ENCODE measurements at regions of chr3 and their contacts with region 1.

Region 1: GRCh38 chr3:195259475-195260279 is 11.3 kb downstream of the XXYLT1 start:
- DNase-seq: peak; percentile 94
- H3K4me3 ChIP-seq: peak overlapping the region; percentile 68
- H3K27ac ChIP-seq: peak overlapping the region; percentile 84
- H3K4me1 ChIP-seq: peaks cover 39% of the 10 kb centered on the region
- CTCF ChIP-seq: peak; percentile 64

Region 2: DNA sequence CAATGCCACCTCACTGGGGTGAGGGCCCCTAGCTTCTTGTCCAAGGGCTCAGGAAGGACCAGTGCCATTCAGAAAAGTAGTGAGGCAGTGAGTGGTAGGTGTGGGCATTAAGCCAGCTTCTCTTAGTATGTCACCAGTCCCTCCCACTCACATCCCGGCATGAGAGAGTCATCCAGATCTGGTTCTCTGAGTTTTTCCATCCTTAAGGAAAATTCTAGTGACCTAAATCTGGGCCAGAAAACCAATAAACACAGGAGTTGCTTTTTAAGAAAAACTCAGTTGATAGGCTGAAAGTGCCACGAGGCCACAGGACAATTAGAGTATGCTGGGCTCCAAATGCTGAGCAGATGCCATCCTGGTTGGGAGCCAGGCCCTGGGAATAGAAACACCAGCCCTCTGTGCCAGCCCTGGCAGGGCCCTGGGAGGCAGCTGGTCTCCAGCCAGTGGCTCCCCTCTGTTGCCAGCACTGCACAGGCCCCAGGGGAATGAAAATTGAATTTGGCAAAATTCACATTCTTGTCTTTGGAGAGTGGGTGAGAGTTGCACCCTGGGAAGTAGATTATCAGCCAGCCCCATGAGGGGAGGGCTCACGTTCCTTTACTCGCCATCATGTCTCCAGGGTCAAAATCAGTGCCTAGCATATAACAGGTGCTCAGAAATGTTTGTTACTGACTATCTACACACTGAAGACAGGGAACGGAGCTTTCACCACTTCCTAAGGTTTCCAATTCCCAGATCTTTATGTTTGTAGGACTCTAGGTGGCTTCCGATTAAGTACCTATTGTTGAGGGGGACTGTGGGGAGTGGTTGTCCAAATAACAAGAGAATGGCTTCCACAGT is 521.2 kb before region 1 on chr3:
- CTCF ChIA-PET with region 1: no interaction called
- POLR2A ChIA-PET with region 1: no interaction called
- intact Hi-C with region 1: loop called (anchors 1 kb)
- DNase-seq: no peak
- H3K4me3 ChIP-seq: no peak overlapping the region
- H3K27ac ChIP-seq: no peak overlapping the region
- H3K4me1 ChIP-seq: peaks cover 30% of the 10 kb centered on the region
- CTCF ChIP-seq: no peak

Region 3: GRCh38 chr3:195001961-195002861 is 257.5 kb before region 1 on chr3:
- CTCF ChIA-PET with region 1: interaction called, 3 read pairs
- POLR2A ChIA-PET with region 1: no interaction called
- intact Hi-C with region 1: loop called (anchors 1 kb)
- DNase-seq: peak; percentile 58
- H3K4me3 ChIP-seq: no peak overlapping the region
- H3K27ac ChIP-seq: no peak overlapping the region
- H3K4me1 ChIP-seq: peaks cover 4% of the 10 kb centered on the region
- CTCF ChIP-seq: peak; percentile 80

Region 4: DNA sequence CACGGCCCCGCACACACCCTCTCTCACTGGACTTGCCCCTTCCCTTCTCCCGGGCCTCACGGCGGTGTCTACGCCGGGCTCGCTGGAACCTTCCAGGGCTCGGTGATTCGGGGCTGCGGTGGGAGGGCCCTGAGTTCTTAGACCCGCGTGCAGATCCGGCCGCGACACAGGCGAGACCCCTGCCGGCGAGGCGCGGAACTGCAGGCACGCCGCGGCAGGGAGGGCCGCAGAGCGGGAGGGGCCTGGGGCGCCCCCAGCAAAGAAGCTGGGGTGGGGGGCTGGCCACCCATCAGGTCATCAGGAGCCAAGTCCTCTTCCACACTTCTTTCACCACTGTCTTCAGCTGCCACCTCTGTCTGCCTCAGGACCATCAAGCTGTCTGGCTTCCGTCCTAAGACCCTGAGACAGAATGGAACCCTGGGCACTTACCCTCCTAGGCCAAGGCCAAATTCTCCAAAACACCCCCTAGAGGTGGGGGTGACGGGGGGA is 153.2 kb before region 1 on chr3:
- CTCF ChIA-PET with region 1: no interaction called
- POLR2A ChIA-PET with region 1: no interaction called
- intact Hi-C with region 1: loop called (anchors 2 kb)
- DNase-seq: peak; percentile 69
- H3K4me3 ChIP-seq: no peak overlapping the region
- H3K27ac ChIP-seq: no peak overlapping the region
- H3K4me1 ChIP-seq: peaks cover 11% of the 10 kb centered on the region
- CTCF ChIP-seq: peak; percentile 95

Region 5: DNA sequence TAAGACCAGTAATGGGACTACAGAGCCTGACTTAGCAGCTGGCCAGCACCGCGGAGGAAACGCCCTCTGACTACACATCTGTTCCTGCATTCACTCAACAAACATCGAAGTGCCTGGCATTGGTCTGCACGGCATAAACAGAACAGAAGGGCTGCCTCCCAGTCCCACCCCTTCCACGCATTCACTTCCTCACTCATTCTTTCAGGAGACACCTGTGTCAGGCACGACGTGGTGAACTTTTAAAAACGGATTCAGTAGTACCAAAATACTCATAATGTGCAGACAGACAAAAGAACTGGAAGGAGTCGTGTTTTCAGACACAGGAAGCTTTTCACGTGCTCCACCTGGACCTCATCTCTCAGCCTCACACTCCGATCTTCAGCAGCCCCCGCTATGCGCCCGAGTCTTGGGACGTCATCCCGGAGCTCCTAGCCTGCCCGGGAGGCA is 112.0 kb before region 1 on chr3:
- CTCF ChIA-PET with region 1: no interaction called
- POLR2A ChIA-PET with region 1: interaction called, 5 read pairs
- intact Hi-C with region 1: loop called (anchors 1 kb)
- DNase-seq: peak; percentile 80
- H3K4me3 ChIP-seq: peak overlapping the region; percentile 63
- H3K27ac ChIP-seq: peak overlapping the region; percentile 77
- H3K4me1 ChIP-seq: peaks cover 71% of the 10 kb centered on the region
- CTCF ChIP-seq: no peak

Region 6: DNA sequence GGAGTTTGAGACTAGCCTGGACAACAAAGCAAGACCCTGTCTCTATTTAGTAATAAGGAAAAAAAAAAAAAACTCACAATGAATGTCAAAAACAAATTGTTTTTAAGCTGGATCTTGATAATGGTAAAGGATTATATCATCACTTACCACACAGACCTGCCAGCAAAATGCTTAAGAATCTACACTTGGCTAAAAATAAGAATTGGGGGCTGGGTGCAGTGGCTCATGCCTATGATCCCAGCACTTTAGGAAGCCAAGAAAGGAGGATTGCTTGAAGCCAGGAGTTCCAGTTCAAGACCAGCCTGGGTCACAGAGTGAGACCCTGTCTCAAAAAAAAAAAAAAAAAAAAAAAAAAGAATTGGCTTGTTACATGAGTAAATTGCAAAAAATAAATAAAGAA is 152.2 kb after region 1 on chr3:
- CTCF ChIA-PET with region 1: no interaction called
- POLR2A ChIA-PET with region 1: no interaction called
- intact Hi-C with region 1: no loop called
- DNase-seq: no peak
- H3K4me3 ChIP-seq: no peak overlapping the region
- H3K27ac ChIP-seq: no peak overlapping the region
- H3K4me1 ChIP-seq: no peaks in the 10 kb centered on the region
- CTCF ChIP-seq: no peak